OCI-LY7 (cell line): ENCODE measurements at regions of chr1 and their contacts with region 1.

Region 1: GRCh38 chr1:92901699-92902405 is 59.4 kb downstream of the DIPK1A start:
- DNase-seq: no peak
- H3K4me3 ChIP-seq: no peak overlapping the region
- H3K27ac ChIP-seq: peak overlapping the region; percentile 18
- H3K4me1 ChIP-seq: peaks cover 53% of the 10 kb centered on the region
- CTCF ChIP-seq: no peak

Region 2: GRCh38 chr1:91611498-91611917 is 1290.3 kb before region 1 on chr1:
- CTCF ChIA-PET with region 1: no interaction called
- POLR2A ChIA-PET with region 1: no interaction called
- intact Hi-C with region 1: no loop called
- DNase-seq: no peak
- H3K4me3 ChIP-seq: no peak overlapping the region
- H3K27ac ChIP-seq: no peak overlapping the region
- H3K4me1 ChIP-seq: no peaks in the 10 kb centered on the region
- CTCF ChIP-seq: no peak

Region 3: DNA sequence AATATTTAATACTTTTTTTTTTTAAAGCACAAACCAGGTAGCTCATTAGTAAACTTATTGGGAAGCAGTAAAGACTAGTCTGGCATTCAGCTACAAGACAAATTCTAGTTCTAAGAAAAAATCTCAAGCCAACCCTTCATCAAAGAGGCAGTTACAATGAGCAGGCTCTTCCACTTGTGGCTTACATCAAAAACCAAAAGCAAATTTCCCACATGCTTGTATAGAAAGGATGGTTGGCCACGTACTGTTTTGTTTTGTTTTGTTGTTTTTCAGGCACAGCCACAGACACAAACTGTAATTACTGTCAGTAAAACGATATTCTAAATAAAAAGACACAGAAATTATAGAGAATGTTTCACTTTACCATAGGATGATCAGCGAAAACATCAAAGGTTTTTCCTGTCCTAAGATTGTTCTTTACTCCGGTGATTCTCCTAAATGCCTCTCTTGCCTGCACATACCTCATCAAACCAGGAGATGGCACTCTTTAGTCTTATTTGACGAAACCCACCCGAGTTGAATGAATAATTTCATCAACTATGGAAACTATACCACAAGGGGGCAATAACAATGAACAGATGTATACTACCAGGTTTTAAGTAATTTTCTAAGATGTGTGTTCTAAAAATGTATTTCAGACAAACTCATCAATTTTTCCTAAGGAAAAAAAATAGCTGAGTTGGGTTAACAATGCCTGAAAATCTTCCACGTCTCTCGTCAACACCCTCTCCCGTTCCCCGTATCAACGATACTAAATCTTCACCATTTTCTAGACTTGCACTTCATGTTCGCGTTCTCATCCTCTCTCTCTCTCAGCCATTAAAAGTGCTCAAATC is 43.1 kb before region 1 on chr1:
- CTCF ChIA-PET with region 1: interaction called, 4 read pairs
- POLR2A ChIA-PET with region 1: interaction called, 10 read pairs
- intact Hi-C with region 1: no loop called
- DNase-seq: peak; percentile 91
- H3K4me3 ChIP-seq: peak overlapping the region; percentile 56
- H3K27ac ChIP-seq: peak overlapping the region; percentile 65
- H3K4me1 ChIP-seq: peaks cover 28% of the 10 kb centered on the region
- CTCF ChIP-seq: peak; percentile 100

Region 4: DNA sequence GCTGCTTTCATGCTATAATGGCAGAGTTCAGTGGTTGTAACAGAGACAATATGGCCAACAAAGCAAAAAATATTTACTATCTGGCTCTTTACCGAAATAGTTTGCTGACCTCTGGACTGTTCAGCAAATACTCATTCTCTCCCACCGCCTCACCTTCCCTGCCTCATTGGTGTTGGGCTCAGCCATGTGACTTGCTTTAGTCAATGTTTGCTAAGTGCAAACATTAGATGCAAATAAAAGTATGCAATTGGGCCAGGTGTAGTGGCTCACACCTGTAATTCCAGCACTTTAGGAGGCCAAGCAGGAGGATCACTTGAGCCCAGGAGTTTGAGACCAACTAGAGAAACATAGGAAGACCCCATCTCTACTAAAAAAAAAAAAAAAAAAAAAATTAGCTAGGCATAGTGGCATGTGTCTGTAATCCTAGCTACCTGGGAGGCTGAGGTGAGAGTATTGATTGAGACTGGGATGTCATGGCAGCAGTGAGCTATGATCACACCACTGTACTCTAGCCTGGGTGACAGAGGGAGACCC is 14.9 kb before region 1 on chr1:
- CTCF ChIA-PET with region 1: interaction called, 3 read pairs
- POLR2A ChIA-PET with region 1: interaction called, 54 read pairs
- intact Hi-C with region 1: no loop called
- DNase-seq: no peak
- H3K4me3 ChIP-seq: no peak overlapping the region
- H3K27ac ChIP-seq: no peak overlapping the region
- H3K4me1 ChIP-seq: peaks cover 39% of the 10 kb centered on the region
- CTCF ChIP-seq: no peak

Region 5: GRCh38 chr1:92968138-92969032 is 66.5 kb after region 1 on chr1:
- CTCF ChIA-PET with region 1: no interaction called
- POLR2A ChIA-PET with region 1: no interaction called
- intact Hi-C with region 1: no loop called
- DNase-seq: peak; percentile 63
- H3K4me3 ChIP-seq: peak overlapping the region; percentile 5
- H3K27ac ChIP-seq: peak overlapping the region; percentile 58
- H3K4me1 ChIP-seq: peaks cover 92% of the 10 kb centered on the region
- CTCF ChIP-seq: peak; percentile 97